ENCODE measurements at regions of chr6 and their contacts with region 1.

Region 1: DNA sequence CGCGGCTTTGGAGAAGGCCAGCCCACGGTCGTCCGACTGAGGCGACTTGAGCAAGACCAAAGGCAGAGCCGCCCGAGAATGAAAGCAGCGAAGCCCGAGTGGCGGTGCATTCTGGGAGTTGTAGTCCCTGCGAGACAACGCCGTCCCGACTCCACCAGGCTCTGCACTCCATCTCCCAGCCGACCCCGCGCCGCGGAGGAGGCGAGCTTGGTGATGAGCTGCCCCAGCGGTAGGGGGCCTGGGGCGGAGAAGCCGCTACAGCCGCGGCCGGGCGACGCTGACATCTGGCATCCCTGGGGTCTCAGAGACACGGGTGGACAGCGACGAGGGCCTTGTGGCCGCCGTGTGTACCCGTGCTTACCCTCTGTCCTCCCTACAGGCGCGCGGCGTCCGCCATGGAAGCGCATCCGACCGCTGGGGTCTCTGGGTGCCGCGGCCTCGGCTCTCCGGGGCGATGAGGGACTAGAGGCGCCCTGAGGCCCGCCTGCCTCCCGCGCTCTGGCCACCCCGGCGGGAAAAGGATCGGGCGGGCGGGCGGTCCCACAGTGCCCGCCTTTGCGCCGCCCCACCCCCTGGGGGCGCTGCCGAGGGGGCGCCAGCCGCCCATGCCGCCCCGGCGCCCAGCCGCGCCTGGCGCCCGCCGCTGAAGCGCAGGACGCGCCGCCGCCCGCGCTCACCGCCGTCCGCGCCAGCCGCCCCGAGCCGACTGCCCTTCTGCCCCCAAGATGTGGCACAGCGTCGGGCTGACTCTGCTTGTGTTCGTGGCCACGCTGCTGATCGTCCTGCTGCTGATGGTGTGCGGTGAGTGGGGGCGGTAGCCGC is at the start of gene SMIM13:
- DNase-seq: peak; percentile 97
- H3K4me3 Mint-ChIP-seq: peak within 1 kb of the TSS; percentile 97
- H3K27ac Mint-ChIP-seq: peak within 1 kb of the TSS; percentile 98
- H3K4me1 Mint-ChIP-seq: peaks cover 27% of the 10 kb centered on the region
- H3K27me3 Mint-ChIP-seq: no peaks in the 10 kb centered on the region
- total RNA-seq, gene SMIM13: 7.2 to 9.5 TPM

Region 2: GRCh38 chr6:10528170-10528981 is 565.4 kb before region 1 on chr6:
- CTCF ChIA-PET with region 1: no interaction called
- POLR2A ChIA-PET with region 1: no interaction called
- intact Hi-C with region 1: loop called (anchors 5 kb)
- DNase-seq: peak; percentile 37
- H3K4me3 Mint-ChIP-seq: peak overlapping the region; percentile 73
- H3K27ac Mint-ChIP-seq: peak overlapping the region; percentile 61
- H3K4me1 Mint-ChIP-seq: peaks cover 47% of the 10 kb centered on the region
- H3K27me3 Mint-ChIP-seq: no peaks in the 10 kb centered on the region

Region 3: GRCh38 chr6:10722820-10723566 is 370.8 kb before region 1 on chr6 and contains the start of gene TMEM14C:
- CTCF ChIA-PET with region 1: no interaction called
- POLR2A ChIA-PET with region 1: interaction called, 3 read pairs
- intact Hi-C with region 1: loop called (anchors 1 kb)
- DNase-seq: peak; percentile 95
- H3K4me3 Mint-ChIP-seq: peak within 1 kb of the TSS; percentile 84
- H3K27ac Mint-ChIP-seq: peak within 1 kb of the TSS; percentile 82
- H3K4me1 Mint-ChIP-seq: peaks cover 34% of the 10 kb centered on the region
- H3K27me3 Mint-ChIP-seq: no peaks in the 10 kb centered on the region
- total RNA-seq, gene TMEM14C: 84.9 to 87.6 TPM

Region 4: GRCh38 chr6:10837995-10838793 is 255.6 kb before region 1 on chr6 and contains the start of gene MAK:
- CTCF ChIA-PET with region 1: no interaction called
- POLR2A ChIA-PET with region 1: interaction called, 3 read pairs
- intact Hi-C with region 1: loop called (anchors 1 kb)
- DNase-seq: peak; percentile 91
- H3K4me3 Mint-ChIP-seq: peak within 1 kb of the TSS; percentile 73
- H3K27ac Mint-ChIP-seq: peak within 1 kb of the TSS; percentile 98
- H3K4me1 Mint-ChIP-seq: peaks cover 31% of the 10 kb centered on the region
- H3K27me3 Mint-ChIP-seq: peaks cover 40% of the 10 kb centered on the region
- total RNA-seq, gene MAK: 0.87 to 1.1 TPM

Region 5: GRCh38 chr6:10933126-10933525 is 160.7 kb before region 1 on chr6:
- CTCF ChIA-PET with region 1: no interaction called
- POLR2A ChIA-PET with region 1: no interaction called
- intact Hi-C with region 1: no loop called
- DNase-seq: no peak
- H3K4me3 Mint-ChIP-seq: no peak overlapping the region
- H3K27ac Mint-ChIP-seq: no peak overlapping the region
- H3K4me1 Mint-ChIP-seq: no peaks in the 10 kb centered on the region
- H3K27me3 Mint-ChIP-seq: peaks cover 10% of the 10 kb centered on the region

Region 6: DNA sequence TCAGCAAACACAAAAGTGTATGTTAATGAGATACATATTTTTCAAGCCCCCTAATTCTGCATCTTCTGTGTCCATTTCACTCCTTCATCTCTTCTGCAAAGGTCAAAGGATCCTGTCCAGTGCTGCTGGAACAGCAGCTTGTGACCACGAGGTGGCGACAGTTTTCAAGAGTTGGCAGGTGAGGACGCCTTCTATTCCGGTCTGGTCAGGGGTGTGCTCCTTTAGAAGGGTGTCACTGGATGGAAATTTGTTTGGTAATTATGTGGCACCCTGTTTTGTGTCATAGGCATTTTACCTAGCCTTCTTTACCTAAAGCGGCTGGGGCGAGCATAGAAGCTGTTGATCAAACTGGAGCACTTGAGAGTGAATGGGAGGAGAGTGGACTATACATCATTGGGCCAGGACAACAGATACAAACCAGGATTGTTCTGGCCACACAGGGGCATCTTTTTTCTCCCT is 50.6 kb after region 1 on chr6:
- CTCF ChIA-PET with region 1: no interaction called
- POLR2A ChIA-PET with region 1: no interaction called
- intact Hi-C with region 1: loop called (anchors 1 kb)
- DNase-seq: peak; percentile 86
- H3K4me3 Mint-ChIP-seq: no peak overlapping the region
- H3K27ac Mint-ChIP-seq: no peak overlapping the region
- H3K4me1 Mint-ChIP-seq: peaks cover 6% of the 10 kb centered on the region
- H3K27me3 Mint-ChIP-seq: no peaks in the 10 kb centered on the region

Region 7: DNA sequence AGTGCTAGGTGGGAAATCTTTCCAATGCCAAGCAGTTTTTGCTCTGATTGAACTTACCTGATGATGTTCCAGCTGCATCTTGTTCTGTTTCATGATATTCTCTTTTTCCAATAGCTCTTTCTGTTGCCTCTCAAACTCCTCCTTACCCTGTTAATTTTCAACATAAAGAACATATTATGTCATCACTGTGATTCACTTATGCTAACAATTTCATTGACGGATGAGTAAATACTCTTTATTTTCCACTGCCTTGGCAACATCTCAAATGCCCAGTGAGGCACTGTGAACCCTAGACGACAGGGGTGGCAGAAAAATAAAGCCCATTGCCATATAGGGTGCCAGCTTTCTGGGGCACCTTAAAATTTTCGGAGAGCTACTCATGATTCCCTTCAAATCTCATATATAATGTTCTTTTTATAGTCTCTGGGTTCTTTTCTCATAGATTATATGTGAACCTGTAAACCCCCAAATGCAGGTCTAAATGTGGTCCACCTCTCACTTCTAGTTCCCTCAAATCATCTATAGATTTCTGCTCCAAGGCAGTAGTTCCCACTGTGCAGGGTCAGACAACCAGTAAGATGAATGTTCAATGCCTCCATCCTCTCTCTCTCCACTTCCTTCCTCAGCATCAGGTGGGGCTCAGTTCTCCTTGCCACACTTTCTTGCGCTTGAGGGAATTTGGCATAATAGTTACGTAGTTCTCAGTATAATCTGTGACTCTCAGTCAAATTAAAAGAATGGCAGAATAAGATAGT is 94.5 kb after region 1 on chr6:
- CTCF ChIA-PET with region 1: no interaction called
- POLR2A ChIA-PET with region 1: no interaction called
- intact Hi-C with region 1: no loop called
- DNase-seq: no peak
- H3K4me3 Mint-ChIP-seq: no peak overlapping the region
- H3K27ac Mint-ChIP-seq: no peak overlapping the region
- H3K4me1 Mint-ChIP-seq: no peaks in the 10 kb centered on the region
- H3K27me3 Mint-ChIP-seq: no peaks in the 10 kb centered on the region

Region 8: DNA sequence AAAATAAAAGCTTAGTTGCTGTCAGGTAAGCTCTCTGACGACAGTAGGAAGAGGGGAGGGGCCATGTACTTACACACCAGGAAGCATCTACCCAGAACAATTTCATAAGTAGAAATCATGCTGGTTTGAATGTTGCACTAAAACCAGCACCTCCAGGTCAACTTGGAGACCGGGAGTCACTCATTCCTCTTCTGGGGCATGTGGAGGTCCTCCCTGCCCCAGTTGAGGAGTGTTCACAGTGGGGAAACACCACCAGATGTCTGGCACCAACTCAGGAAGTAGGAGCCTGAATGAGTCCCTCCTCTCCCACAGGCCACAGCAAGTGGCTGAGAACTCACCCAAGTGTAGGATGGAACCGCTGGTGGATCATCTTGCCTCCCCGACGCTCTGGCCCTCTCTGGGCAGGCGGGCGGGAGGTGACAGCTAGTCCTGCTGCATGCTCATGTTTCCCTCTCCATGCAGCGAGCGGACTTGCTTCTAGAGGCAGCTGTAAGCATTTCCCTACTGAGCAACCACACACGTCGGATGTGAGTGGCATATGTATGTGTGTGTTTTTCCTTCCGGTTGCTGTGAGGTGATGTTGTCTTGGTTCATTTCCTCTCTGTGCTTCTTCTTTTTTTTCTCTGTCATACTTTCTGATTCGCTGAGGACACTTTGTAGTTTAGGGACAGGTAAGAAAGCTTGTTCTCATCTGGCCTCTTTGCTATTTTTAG is 288.2 kb after region 1 on chr6:
- CTCF ChIA-PET with region 1: no interaction called
- POLR2A ChIA-PET with region 1: no interaction called
- intact Hi-C with region 1: loop called (anchors 5 kb)
- DNase-seq: peak; percentile 82
- H3K4me3 Mint-ChIP-seq: peak overlapping the region; percentile 85
- H3K27ac Mint-ChIP-seq: peak overlapping the region; percentile 95
- H3K4me1 Mint-ChIP-seq: peaks cover 58% of the 10 kb centered on the region
- H3K27me3 Mint-ChIP-seq: no peaks in the 10 kb centered on the region